Activated CD8-positive, alpha-beta memory T cell treated with anti-CD3 and anti-CD28 coated beads, Interleukin-2, amount 10 ng/mL, durations not matched to agents 7 days and 5 days (primary cell): ENCODE measurements at regions of chr5 and their contacts with region 1.

Region 1: DNA sequence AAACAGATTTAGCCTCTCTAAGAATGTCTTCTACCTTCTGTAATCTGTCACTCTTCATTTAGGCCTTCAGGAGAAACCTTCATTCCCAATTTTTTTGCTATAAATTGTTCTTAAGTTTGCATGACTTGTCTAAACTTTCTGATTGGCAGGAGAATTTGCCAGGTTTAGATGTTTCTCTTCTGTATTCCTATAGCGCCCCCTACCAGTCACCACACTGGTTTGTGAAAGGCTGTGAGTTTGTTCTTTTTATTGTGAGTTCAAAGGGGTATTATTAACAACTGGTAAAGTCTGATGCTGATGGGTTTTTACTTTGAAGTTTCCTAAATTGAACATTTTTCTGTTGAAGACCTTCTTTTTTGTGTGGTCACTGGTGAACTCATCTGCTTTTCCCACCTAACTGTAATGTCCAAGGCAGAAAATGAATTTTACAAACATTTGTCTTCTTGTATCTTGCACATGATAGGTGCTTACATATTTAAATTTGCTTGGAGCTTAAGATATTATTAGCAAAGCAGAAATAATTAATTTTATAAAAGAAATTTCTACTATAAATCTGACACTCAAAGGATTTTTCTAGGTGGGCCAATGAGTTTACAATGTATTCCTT is 18.4 kb upstream of the F2RL2 start:
- DNase-seq: peak; percentile 77
- ATAC-seq: peak; percentile 36
- H3K4me3 Mint-ChIP-seq: no peak overlapping the region
- H3K27ac Mint-ChIP-seq: no peak overlapping the region
- H3K4me1 Mint-ChIP-seq: peaks cover 23% of the 10 kb centered on the region
- H3K27me3 Mint-ChIP-seq: no peaks in the 10 kb centered on the region

Region 2: DNA sequence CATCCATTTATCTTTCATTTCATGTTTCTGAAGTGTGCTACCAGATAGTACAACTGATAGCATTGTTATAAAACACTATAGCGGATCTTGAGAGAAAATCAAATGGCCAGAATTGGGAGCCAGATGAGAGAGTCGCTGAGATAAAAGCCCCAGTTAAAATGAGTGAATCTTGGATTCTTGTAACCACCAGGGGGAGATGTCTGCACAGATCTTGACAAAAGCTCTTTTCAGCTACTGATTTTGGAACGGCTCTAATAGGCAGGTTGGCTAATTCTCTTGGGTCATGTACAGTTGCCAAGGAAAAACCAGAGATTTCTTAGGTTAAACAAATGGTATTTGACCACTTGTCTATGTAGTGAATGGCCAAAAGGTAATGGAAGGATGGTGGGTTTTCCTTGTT is 40.1 kb before region 1 on chr5:
- CTCF ChIA-PET with region 1: interaction called, 10 read pairs
- DNase-seq: no peak
- ATAC-seq: peak; percentile 58
- H3K4me3 Mint-ChIP-seq: no peak overlapping the region
- H3K27ac Mint-ChIP-seq: no peak overlapping the region
- H3K4me1 Mint-ChIP-seq: peaks cover 3% of the 10 kb centered on the region
- H3K27me3 Mint-ChIP-seq: no peaks in the 10 kb centered on the region

Region 3: DNA sequence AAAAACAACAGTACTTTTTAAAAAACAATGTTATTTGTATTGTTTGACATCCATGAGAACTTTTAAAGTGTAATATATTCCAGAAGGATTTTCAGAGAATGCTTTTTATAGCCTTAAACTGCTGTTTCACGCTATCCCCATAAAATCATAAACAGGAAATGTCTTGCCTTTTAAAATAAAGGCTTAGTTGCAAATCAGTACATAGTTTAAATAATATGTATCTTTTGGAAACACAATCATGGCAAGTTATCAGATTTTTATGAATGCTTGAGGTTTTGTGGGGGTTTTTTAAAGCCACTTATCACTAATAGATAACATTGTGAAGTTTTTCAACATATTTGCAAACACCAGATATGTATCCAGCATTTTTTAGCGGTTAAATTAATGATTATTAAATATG is 18.7 kb after region 1 on chr5:
- CTCF ChIA-PET with region 1: no interaction called
- DNase-seq: no peak
- ATAC-seq: no peak
- H3K4me3 Mint-ChIP-seq: no peak overlapping the region
- H3K27ac Mint-ChIP-seq: no peak overlapping the region
- H3K4me1 Mint-ChIP-seq: no peaks in the 10 kb centered on the region
- H3K27me3 Mint-ChIP-seq: no peaks in the 10 kb centered on the region